Endothelial cell of umbilical vein (primary cell): ENCODE measurements at regions of chr11 and their contacts with region 1.

Region 1: GRCh38 chr11:48109046-48109666 is 107.5 kb upstream of the OR4B1 start:
- DNase-seq: peak; percentile 63
- H3K4me3 ChIP-seq: no peak overlapping the region
- H3K27ac ChIP-seq: no peak overlapping the region
- H3K4me1 ChIP-seq: peaks cover 4% of the 10 kb centered on the region
- H3K27me3 ChIP-seq: no peaks in the 10 kb centered on the region
- CTCF ChIP-seq: peak; percentile 6 to 14
- POLR2A ChIP-seq: no peak

Region 2: GRCh38 chr11:47766305-47767227 is 342.6 kb before region 1 on chr11:
- CTCF ChIA-PET with region 1: interaction called, 3 read pairs
- POLR2A ChIA-PET with region 1: no interaction called
- dilution Hi-C with region 1: no loop called
- intact Hi-C with region 1: loop called (anchors 5 kb)
- DNase-seq: peak; percentile 73
- H3K4me3 ChIP-seq: peak overlapping the region; percentile 61 to 97 (median 62)
- H3K27ac ChIP-seq: peak overlapping the region; percentile 81
- H3K4me1 ChIP-seq: peaks cover 14% of the 10 kb centered on the region
- H3K27me3 ChIP-seq: no peaks in the 10 kb centered on the region
- CTCF ChIP-seq: no peak
- POLR2A ChIP-seq: no peak

Region 3: GRCh38 chr11:47924184-47924691 is 184.9 kb before region 1 on chr11:
- CTCF ChIA-PET with region 1: interaction called, 17 read pairs
- POLR2A ChIA-PET with region 1: no interaction called
- dilution Hi-C with region 1: no loop called
- intact Hi-C with region 1: no loop called
- DNase-seq: peak; percentile 35
- H3K4me3 ChIP-seq: no peak overlapping the region
- H3K27ac ChIP-seq: no peak overlapping the region
- H3K4me1 ChIP-seq: peaks cover 6% of the 10 kb centered on the region
- H3K27me3 ChIP-seq: no peaks in the 10 kb centered on the region
- CTCF ChIP-seq: no peak
- POLR2A ChIP-seq: no peak

Region 4: GRCh38 chr11:47980245-47981049 is 128.7 kb before region 1 on chr11 and contains the start of gene PTPRJ:
- CTCF ChIA-PET with region 1: interaction called, 5 read pairs
- POLR2A ChIA-PET with region 1: no interaction called
- dilution Hi-C with region 1: no loop called
- intact Hi-C with region 1: loop called (anchors 1 kb)
- DNase-seq: peak; percentile 32
- H3K4me3 ChIP-seq: peak within 1 kb of the TSS; percentile 56 to 81 (median 62)
- H3K27ac ChIP-seq: no peak within 1 kb of the TSS
- H3K4me1 ChIP-seq: peaks cover 15% of the 10 kb centered on the region
- H3K27me3 ChIP-seq: no peaks in the 10 kb centered on the region
- CTCF ChIP-seq: no peak
- POLR2A ChIP-seq: peak; percentile 27
- total RNA-seq, gene PTPRJ: 7.7 and 8.8 TPM in 2 replicates

Region 5: GRCh38 chr11:48093795-48094642 is 15.1 kb before region 1 on chr11:
- CTCF ChIA-PET with region 1: interaction called, 46 read pairs
- POLR2A ChIA-PET with region 1: interaction called, 3 read pairs
- dilution Hi-C with region 1: no loop called
- intact Hi-C with region 1: no loop called
- DNase-seq: no peak
- H3K4me3 ChIP-seq: no peak overlapping the region
- H3K27ac ChIP-seq: no peak overlapping the region
- H3K4me1 ChIP-seq: no peaks in the 10 kb centered on the region
- H3K27me3 ChIP-seq: no peaks in the 10 kb centered on the region
- CTCF ChIP-seq: no peak
- POLR2A ChIP-seq: no peak